ENCODE measurements at regions of chr17 and their contacts with region 1.

Region 1: DNA sequence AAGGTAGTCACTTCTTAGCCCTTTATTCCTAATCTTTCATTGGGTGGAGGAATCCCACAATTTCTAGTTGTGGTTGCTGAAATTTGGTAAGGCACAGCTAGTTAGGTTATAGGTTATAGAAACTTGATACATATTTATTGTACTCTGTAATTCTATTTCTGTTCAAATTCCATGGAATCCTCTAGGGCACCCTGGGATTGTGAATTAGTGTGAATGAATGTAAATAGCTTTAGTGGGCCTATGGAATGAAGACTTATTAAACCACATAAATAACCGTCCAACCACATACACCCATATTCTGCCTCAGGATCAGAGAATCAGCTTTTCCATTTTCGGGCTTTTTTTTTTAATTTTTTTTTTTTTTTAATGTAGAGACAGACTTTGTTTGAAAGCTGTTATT is 9.2 kb downstream of the TANC2 start:
- DNase-seq: no peak
- ATAC-seq: no peak
- H3K4me3 ChIP-seq: no peak overlapping the region
- H3K27ac ChIP-seq: no peak overlapping the region
- H3K4me1 ChIP-seq: no peaks in the 10 kb centered on the region
- H3K27me3 ChIP-seq: no peaks in the 10 kb centered on the region
- CTCF ChIP-seq: no peak

Region 2: DNA sequence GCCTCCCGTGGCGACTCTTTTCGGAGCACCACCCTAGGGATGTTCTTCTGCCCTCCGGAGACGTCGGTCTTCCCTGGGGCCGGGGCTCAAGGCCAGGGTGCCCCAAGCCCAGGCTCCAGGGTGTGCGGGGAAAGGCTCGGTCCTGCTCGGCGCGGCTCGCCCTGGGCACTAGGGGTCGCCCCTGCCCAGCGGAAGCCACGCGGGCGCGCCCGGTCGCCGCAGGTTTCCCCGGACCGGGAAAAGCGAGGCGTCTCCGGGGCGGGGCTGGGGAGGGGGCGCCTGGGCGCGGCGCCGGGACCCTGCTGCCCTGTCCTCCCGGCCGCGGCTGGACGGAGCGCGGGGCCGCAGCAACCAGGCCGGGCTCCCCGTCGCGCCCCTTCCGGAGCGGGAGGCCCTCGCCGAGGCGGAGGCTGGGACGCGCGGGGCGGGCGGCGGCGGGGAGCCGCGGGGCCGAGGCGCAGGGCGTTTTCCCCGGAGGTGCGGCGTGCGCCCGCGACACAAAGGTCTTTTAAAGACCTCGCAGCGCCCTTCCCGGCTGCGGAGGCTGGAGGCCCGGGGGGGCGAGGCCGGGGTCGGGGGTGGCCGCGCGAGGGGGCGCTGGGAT is 271.3 kb before region 1 on chr17:
- intact Hi-C with region 1: loop called (anchors 10 kb)
- DNase-seq: peak; percentile 92
- ATAC-seq: peak; percentile 95
- H3K4me3 ChIP-seq: peak overlapping the region; percentile 69
- H3K27ac ChIP-seq: peak overlapping the region; percentile 78
- H3K4me1 ChIP-seq: peaks cover 17% of the 10 kb centered on the region
- H3K27me3 ChIP-seq: no peaks in the 10 kb centered on the region
- CTCF ChIP-seq: peak; percentile 83

Region 3: DNA sequence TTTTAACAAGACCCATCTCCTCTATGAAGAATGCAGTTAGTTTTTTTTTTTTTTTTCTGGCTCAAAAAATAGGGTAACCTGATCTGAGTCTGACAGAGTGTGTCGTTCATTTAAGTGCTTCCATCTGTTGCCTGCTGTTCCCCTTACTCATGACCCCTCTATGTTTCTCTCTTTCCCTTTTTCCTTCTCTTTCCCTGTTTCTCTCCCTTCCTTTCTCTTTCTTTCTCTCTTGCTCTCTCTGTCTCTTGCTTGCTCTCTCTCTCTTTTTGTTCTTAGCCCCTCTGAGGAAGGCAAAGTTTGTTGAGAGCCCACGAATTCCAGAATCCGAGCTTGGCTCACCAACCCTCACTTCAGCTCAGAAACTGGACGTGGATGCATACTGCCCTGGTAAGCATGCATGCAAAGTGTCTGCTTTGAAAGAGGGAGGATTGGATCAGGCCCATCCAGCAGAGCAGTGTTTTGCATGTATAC is 175.8 kb after region 1 on chr17:
- intact Hi-C with region 1: no loop called
- DNase-seq: no peak
- ATAC-seq: no peak
- H3K4me3 ChIP-seq: no peak overlapping the region
- H3K27ac ChIP-seq: no peak overlapping the region
- H3K4me1 ChIP-seq: no peaks in the 10 kb centered on the region
- H3K27me3 ChIP-seq: no peaks in the 10 kb centered on the region
- CTCF ChIP-seq: no peak

Measured in upper lobe of right lung (tissue), 1 donor.